Left ventricle myocardium inferior (tissue), 1 donor: ENCODE measurements at regions of chr6 and their contacts with region 1.

Region 1: GRCh38 chr6:165721356-165721755 is 58.3 kb upstream of the PDE10A start:
- DNase-seq: no peak
- H3K4me3 ChIP-seq: no peak overlapping the region
- H3K27ac ChIP-seq: no peak overlapping the region
- H3K4me1 ChIP-seq: peaks cover 10% of the 10 kb centered on the region
- H3K27me3 ChIP-seq: peaks cover 4% of the 10 kb centered on the region
- CTCF ChIP-seq: no peak

Region 2: DNA sequence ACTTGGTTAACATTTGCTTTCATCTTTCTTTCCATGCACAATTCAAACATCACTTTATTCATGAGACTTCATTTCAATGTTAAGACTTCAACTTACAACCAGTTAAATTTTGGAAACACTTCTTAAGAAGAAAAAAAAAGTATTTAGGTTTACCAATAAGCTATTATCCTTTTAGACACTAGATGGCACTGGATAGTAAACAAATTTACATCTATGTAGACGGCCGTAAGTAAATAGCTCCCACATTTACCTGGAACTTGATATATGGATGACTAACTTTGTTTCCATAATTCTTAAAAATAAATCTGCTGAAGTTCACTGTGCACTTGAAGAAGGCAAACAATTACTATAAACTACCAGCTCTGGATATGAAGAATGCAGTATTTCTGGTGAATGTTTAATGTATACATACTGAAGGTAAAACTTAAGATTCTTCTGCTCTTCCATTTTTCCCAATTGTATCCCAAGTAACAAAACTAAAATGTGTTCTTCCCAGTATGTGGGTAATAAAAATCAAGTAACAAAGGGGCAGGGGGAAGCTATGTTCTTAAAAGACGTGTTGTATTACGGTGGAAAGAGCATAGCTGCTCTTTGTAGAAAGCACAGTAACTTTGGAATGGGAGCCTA is 281.3 kb before region 1 on chr6:
- intact Hi-C with region 1: loop called (anchors 5 kb)
- DNase-seq: no peak
- H3K4me3 ChIP-seq: no peak overlapping the region
- H3K27ac ChIP-seq: no peak overlapping the region
- H3K4me1 ChIP-seq: no peaks in the 10 kb centered on the region
- H3K27me3 ChIP-seq: no peaks in the 10 kb centered on the region
- CTCF ChIP-seq: peak; percentile 74

Region 3: DNA sequence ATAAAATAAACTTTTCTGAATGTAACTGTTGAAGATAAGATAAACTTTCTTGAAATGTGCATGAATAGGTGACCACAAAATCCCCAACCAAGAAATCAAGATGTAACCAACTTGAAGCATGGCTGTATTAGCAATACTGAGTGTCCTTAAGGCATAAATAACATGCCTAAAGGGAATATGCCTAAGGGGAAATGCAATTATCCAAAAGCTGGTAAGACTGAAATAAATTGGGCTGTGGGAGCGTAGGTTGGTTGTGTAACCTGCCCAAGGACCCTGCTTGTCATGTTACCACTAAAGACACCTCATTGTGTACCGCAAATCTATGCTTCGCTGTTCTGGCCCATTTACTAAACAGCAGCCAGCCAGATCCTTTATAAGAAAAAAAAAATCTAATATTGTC is 142.4 kb after region 1 on chr6:
- intact Hi-C with region 1: no loop called
- DNase-seq: no peak
- H3K4me3 ChIP-seq: no peak overlapping the region
- H3K27ac ChIP-seq: no peak overlapping the region
- H3K4me1 ChIP-seq: no peaks in the 10 kb centered on the region
- H3K27me3 ChIP-seq: peaks cover 45% of the 10 kb centered on the region
- CTCF ChIP-seq: no peak